CD14-positive monocyte (primary cell): ENCODE measurements at regions of chr19 and their contacts with region 1.

Region 1: GRCh38 chr19:57477191-57478008 is at the start of gene ZNF772:
- DNase-seq: peak; percentile 90 to 95 (median 93)
- H3K4me3 ChIP-seq: peak within 1 kb of the TSS; percentile 82 to 95 (median 87)
- H3K4me3 Mint-ChIP-seq: peak within 1 kb of the TSS; percentile 79 to 92
- H3K27ac ChIP-seq: peak within 1 kb of the TSS; percentile 51 to 91
- H3K27ac Mint-ChIP-seq: peak within 1 kb of the TSS; percentile 67 to 92 (median 88)
- H3K4me1 ChIP-seq: peaks cover 12 to 15% of the 10 kb centered on the region in 2 donors
- H3K4me1 Mint-ChIP-seq: peaks cover 13% of the 10 kb centered on the region
- H3K27me3 ChIP-seq: no peaks in the 10 kb centered on the region
- H3K27me3 Mint-ChIP-seq: peaks cover 0 to 2% (median 0%) of the 10 kb centered on the region in 3 donors
- CTCF ChIP-seq: peak; percentile 73
- polyA plus RNA-seq, gene ZNF772: 0.32 to 1.2 (median 0.99) TPM

Region 2: DNA sequence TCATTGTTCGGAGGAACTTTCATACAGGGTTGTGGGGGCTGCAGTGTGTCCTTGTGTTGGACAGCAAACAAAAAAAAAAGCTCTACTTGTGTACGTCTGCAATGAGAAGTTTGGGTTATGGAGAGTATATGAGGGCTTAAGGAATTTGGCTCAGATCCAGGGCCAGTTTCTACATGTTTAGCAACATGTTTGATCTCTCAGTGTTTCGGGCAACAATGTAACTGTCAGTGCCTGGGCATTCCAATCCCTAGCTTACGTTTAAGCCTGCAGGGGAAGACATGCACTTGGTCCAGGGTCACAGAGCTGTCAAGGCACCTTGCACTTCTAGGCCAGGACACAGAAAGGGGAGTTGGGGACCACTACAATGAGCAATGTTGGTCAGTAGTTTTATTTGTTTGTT is 143.2 kb before region 1 on chr19:
- intact Hi-C with region 1: no loop called
- DNase-seq: no peak
- H3K4me3 ChIP-seq: no peak overlapping the region
- H3K4me3 Mint-ChIP-seq: no peak overlapping the region
- H3K27ac ChIP-seq: no peak overlapping the region
- H3K27ac Mint-ChIP-seq: no peak overlapping the region
- H3K4me1 ChIP-seq: no peaks in the 10 kb centered on the region
- H3K4me1 Mint-ChIP-seq: no peaks in the 10 kb centered on the region
- H3K27me3 ChIP-seq: no peaks in the 10 kb centered on the region
- H3K27me3 Mint-ChIP-seq: peaks cover 0 to 2% (median 0%) of the 10 kb centered on the region in 3 donors
- CTCF ChIP-seq: no peak

Region 3: GRCh38 chr19:57410877-57411671 is 66.3 kb before region 1 on chr19 and contains the start of gene ZNF17:
- intact Hi-C with region 1: loop called in 1 of 2 experiments (anchors 1 kb)
- DNase-seq: peak; percentile 87 to 94 (median 90)
- H3K4me3 ChIP-seq: peak within 1 kb of the TSS; percentile 77 to 95 (median 91)
- H3K4me3 Mint-ChIP-seq: peak within 1 kb of the TSS; percentile 94 to 96
- H3K27ac ChIP-seq: peak within 1 kb of the TSS; percentile 10 to 81
- H3K27ac Mint-ChIP-seq: peak within 1 kb of the TSS; percentile 23 to 95 (median 78)
- H3K4me1 ChIP-seq: peaks cover 14 to 17% of the 10 kb centered on the region in 2 donors
- H3K4me1 Mint-ChIP-seq: peaks cover 14% of the 10 kb centered on the region
- H3K27me3 ChIP-seq: no peaks in the 10 kb centered on the region
- H3K27me3 Mint-ChIP-seq: peaks cover 0 to 3% (median 0%) of the 10 kb centered on the region in 3 donors
- CTCF ChIP-seq: no peak
- polyA plus RNA-seq, gene ZNF17: 1.4 to 3.3 (median 2.3) TPM